ENCODE measurements at regions of chr19 and their contacts with region 1.

Region 1: GRCh38 chr19:18000935-18001778 is 6.8 kb upstream of the ARRDC2 start:
- DNase-seq: peak; percentile 63
- ATAC-seq: peak; percentile 39
- H3K4me3 Mint-ChIP-seq: peak overlapping the region; percentile 71
- H3K27ac Mint-ChIP-seq: no peak overlapping the region
- H3K4me1 Mint-ChIP-seq: peaks cover 6% of the 10 kb centered on the region
- H3K27me3 Mint-ChIP-seq: peaks cover 49% of the 10 kb centered on the region
- CTCF ChIP-seq: no peak

Region 2: DNA sequence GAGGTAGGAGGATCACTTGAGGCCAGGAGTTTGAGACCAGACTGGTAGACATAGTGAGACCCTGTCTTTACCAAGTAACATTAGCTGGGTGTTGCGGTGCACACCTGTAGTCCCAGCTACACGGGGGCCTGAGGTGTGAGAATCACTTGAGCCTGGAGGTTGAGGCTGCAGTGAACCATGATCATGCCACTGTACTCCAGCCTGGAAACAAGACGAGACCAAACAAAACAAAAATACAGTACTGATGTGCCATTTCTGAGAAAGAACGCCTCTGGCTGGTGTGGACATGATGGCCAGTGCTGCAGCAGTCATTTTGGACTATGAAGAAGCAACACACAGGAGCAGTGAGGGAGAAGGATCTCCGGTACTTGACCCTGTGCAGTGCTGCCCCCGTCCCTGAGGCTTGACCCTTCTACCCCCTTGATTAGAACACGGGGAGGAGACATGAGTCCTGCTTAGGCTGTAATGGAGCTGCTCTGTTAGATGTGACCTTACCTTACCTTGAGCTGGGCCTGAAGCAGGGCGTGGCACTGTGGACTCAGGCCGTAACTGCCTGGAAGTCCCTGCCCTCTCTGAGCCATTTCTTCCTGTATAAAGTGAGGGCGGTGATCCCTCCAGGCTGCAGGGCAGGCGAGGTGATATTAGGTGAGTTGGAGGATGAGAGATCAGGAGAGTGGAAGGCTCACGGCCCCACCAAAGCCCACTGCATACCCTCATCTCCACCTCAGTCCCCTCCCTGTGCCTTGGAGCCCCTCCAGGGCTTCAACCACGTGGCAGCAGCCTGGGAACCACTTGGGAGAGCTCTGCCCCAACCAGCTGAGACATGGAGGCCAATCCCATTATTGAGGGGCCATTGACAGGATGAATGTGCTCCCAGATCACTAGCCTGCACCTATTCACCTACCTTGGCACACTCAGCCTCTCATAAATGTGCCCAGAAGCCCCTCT is 135.5 kb before region 1 on chr19:
- CTCF ChIA-PET with region 1: interaction called, 11 read pairs
- POLR2A ChIA-PET with region 1: no interaction called
- DNase-seq: no peak
- ATAC-seq: peak; percentile 43
- H3K4me3 Mint-ChIP-seq: no peak overlapping the region
- H3K27ac Mint-ChIP-seq: peak overlapping the region; percentile 74
- H3K4me1 Mint-ChIP-seq: peaks cover 37% of the 10 kb centered on the region
- H3K27me3 Mint-ChIP-seq: peaks cover 2% of the 10 kb centered on the region
- CTCF ChIP-seq: no peak

Region 3: GRCh38 chr19:17873786-17874757 is 127.1 kb before region 1 on chr19:
- CTCF ChIA-PET with region 1: interaction called, 15 read pairs
- POLR2A ChIA-PET with region 1: no interaction called
- DNase-seq: peak; percentile 88
- ATAC-seq: peak; percentile 76
- H3K4me3 Mint-ChIP-seq: peak overlapping the region; percentile 68
- H3K27ac Mint-ChIP-seq: no peak overlapping the region
- H3K4me1 Mint-ChIP-seq: peaks cover 12% of the 10 kb centered on the region
- H3K27me3 Mint-ChIP-seq: peaks cover 13% of the 10 kb centered on the region
- CTCF ChIP-seq: no peak

Region 4: DNA sequence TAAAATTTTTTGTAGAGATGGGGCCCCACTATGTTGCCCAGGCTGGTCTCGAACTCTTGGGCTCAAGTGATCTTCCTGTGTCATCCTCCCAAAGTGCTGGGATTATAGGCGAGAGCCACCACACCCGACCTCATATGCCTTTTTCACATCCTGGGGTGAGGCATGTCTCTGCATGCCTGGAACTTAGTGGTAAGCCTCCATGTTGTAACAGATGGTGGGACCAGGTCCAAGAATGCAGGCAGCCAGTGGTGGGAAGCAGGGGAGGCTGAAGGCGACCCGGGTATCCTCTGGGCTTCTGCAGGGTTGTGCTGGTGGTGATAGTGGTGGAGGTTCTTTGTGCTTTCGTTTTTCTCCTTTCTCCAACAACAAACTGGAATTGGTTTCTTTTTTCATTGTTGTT is 98.5 kb before region 1 on chr19:
- CTCF ChIA-PET with region 1: no interaction called
- POLR2A ChIA-PET with region 1: no interaction called
- DNase-seq: no peak
- ATAC-seq: no peak
- H3K4me3 Mint-ChIP-seq: no peak overlapping the region
- H3K27ac Mint-ChIP-seq: no peak overlapping the region
- H3K4me1 Mint-ChIP-seq: no peaks in the 10 kb centered on the region
- H3K27me3 Mint-ChIP-seq: peaks cover 16% of the 10 kb centered on the region
- CTCF ChIP-seq: no peak

Region 5: DNA sequence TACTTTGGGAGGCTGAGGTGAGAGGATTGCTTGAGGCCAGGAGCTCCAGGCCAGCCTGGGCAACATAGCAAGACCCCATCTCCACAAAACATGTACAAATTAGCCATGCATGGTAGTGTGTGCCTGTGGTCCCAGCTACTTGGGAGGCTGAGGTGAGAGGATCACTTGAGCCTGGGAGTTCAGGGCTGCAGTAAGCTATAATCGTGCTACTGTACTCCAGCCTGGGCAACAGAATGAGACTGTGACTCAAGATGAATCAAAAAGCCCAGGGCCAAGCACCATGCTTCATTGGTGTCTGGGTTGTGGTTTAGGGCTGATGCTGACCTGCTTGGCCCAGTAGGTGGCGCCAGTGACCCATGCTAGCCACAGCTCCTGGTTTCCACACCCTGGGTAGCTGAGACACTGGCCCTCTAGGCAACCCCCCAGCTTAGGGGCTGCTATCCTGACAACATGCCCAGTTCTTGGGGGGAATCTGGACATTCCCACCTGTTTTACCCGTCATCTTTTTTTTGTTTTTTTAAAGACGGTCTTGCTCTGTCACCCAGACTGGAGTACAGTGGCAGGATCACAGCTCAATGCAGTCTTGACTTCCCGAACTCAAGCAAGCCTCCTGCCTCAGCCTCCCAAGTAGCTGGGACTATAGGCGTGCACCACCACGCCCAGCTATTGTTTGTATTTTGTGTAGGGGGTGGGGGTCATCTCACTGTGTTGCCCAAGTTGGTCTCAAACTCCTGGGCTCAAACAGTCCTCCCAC is 62.9 kb before region 1 on chr19:
- CTCF ChIA-PET with region 1: interaction called, 201 read pairs
- POLR2A ChIA-PET with region 1: interaction called, 5 read pairs
- DNase-seq: peak; percentile 85
- ATAC-seq: peak; percentile 75
- H3K4me3 Mint-ChIP-seq: no peak overlapping the region
- H3K27ac Mint-ChIP-seq: no peak overlapping the region
- H3K4me1 Mint-ChIP-seq: peaks cover 16% of the 10 kb centered on the region
- H3K27me3 Mint-ChIP-seq: no peaks in the 10 kb centered on the region; the same call in 1 of the 2 replicates
- CTCF ChIP-seq: peak; percentile 92

Region 6: DNA sequence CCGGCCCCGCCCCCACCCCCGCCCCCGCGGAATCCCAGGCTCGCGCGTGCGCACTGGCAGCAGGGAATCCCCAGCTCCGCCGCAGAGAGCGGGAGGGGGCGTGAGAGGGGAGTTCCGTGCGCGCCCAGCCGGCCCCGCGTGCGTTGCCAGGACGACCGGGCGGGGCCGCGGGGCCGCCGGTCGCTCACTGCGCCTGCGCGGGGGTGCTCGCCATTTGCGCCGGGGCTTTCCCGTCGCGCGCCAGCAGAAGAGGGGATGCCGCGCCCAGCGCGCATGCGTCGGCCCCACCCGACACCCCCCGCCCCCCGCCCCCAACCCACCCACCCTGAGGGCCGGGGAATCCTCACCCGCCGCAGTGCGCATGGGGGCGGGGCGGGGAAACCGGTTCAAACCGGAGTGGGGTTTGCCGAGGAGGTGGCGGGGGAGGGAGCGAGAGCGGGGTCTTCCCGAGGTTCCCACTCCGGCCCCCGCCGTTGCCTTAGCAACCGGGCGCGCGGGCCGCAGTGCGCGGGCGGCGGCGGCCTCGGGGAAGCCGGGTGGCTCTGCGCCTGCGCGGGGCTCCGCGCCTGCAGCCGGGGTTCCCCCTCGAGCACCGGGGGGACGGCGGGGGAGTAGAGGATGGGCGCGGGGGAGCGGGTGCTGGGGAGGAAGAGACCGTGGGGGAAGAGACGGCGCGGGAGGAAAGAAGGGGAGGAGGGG is 53.2 kb before region 1 on chr19:
- CTCF ChIA-PET with region 1: interaction called, 89 read pairs
- POLR2A ChIA-PET with region 1: interaction called, 5 read pairs
- DNase-seq: peak; percentile 97
- ATAC-seq: peak; percentile 27
- H3K4me3 Mint-ChIP-seq: peak overlapping the region; percentile 77
- H3K27ac Mint-ChIP-seq: no peak overlapping the region
- H3K4me1 Mint-ChIP-seq: peaks cover 28% of the 10 kb centered on the region
- H3K27me3 Mint-ChIP-seq: peaks cover 41% of the 10 kb centered on the region
- CTCF ChIP-seq: no peak

Region 7: DNA sequence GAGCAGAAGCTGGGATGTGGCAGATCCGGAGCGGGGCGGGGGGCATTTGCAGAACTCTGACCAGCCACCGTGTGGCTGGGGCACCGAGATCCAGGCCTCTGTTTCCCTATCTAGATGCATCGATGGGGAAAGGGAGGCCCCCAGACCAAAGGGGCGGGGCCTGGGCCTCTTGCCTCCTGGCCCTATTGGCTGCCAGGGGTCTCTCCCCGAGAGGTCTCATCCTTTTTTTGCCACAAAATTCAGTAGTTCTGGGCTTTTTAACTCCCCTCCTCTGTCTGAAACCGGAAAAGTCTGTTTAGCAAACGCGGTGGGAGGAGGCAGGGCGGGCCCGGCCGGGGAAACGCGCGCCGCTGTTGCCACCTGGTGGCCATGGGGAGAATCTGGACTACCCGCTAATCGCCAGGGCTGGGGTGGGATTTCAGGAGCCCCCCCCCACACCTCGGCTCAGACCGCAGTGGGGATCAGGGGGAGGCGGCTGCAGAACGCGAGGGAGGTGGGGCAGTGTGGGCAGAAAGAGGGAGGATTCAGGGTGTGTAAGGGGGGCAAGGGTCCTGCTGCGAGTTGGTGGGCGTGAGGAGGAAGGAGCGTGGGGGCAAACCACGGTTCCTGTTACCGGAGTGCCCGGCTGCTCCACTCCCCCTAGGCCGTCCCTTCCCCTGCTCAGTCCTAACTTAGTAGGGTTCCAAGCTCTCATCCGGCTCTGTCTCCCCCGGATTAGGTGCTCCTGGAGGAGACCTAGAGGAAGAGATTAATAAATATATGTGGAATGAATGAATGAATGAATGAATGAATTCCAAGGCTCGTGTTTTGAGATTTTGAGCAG is 57.3 kb after region 1 on chr19:
- CTCF ChIA-PET with region 1: interaction called, 46 read pairs
- POLR2A ChIA-PET with region 1: no interaction called
- DNase-seq: peak; percentile 86
- ATAC-seq: peak; percentile 86
- H3K4me3 Mint-ChIP-seq: peak overlapping the region; percentile 61
- H3K27ac Mint-ChIP-seq: peak overlapping the region; percentile 63; the same call in 1 of the 2 replicates
- H3K4me1 Mint-ChIP-seq: peaks cover 7% of the 10 kb centered on the region
- H3K27me3 Mint-ChIP-seq: no peaks in the 10 kb centered on the region; the same call in 1 of the 2 replicates
- CTCF ChIP-seq: peak; percentile 92